ENCODE measurements at regions of chr17 and their contacts with region 1.

Region 1: GRCh38 chr17:16285957-16286640 is 67.2 kb downstream of the CENPV start:
- DNase-seq: peak; percentile 74
- H3K4me3 Mint-ChIP-seq: peak overlapping the region; percentile 61
- H3K27ac Mint-ChIP-seq: peak overlapping the region; percentile 95
- H3K4me1 Mint-ChIP-seq: peaks cover 41% of the 10 kb centered on the region
- H3K27me3 Mint-ChIP-seq: no peaks in the 10 kb centered on the region
- CTCF ChIP-seq: peak; percentile 44

Region 2: DNA sequence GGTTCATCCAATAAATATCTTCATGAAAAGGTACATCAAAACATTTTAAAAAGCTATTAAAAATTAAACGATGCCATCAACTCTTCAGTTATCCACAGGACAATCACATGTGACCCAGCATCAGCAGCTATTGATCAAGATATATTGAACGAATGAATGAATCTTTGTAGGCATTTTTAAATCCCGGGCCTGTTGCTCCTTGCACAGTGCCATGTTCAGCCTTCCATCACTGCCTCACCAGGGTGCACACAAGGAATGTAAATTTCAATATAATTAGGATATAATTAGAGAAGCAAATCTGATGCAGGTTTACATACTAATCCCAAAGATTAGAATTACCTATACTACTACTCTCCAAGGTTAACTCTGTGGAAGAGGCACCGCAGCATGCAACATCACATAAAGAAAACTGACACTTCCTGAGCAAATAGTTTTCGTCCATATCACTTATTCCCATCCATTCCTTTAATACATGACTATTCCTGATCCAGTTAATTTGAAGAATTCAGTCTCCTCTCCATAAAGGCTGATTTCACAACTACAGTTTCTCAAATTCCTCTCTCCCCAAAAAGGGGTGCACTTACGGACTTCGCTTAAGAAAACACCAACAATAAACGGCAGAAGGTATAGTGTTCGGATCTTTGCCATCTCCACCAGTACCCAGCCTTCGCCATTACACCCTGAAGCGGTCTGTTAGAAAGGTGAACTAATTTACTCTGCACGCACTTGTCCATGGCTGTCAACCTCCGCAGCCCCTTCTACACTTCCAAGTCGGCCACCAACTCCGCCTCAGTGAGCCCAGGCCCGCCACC is 71.7 kb before region 1 on chr17:
- CTCF ChIA-PET with region 1: no interaction called
- intact Hi-C with region 1: loop called (anchors 1 kb)
- DNase-seq: no peak
- H3K4me3 Mint-ChIP-seq: peak overlapping the region; percentile 95
- H3K27ac Mint-ChIP-seq: peak overlapping the region; percentile 83
- H3K4me1 Mint-ChIP-seq: no peaks in the 10 kb centered on the region
- H3K27me3 Mint-ChIP-seq: no peaks in the 10 kb centered on the region
- CTCF ChIP-seq: no peak

Region 3: DNA sequence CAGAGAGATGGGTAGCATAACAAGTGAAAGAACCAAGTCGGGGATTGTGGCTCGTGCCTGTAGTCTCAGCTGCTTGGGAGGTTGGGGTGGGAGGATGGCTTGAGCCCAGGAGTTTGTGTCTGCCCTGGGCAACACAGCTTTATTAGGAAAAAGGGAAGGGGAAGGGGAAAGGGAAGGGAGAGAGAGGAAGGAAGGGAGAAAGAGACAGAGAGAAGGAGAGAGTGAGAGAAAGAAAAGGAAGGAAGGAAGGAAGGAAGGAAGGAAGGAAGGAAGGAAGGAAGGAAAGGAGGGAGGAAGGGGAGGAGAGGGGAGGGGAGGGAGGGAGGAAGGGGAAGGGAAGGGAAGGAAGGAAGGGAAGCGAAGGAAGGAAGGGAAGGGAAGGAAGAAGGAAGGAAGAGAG is 33.9 kb after region 1 on chr17:
- CTCF ChIA-PET with region 1: interaction called, 15 read pairs
- intact Hi-C with region 1: no loop called
- DNase-seq: no peak
- H3K4me3 Mint-ChIP-seq: no peak overlapping the region
- H3K27ac Mint-ChIP-seq: no peak overlapping the region
- H3K4me1 Mint-ChIP-seq: no peaks in the 10 kb centered on the region
- H3K27me3 Mint-ChIP-seq: no peaks in the 10 kb centered on the region
- CTCF ChIP-seq: no peak

Region 4: DNA sequence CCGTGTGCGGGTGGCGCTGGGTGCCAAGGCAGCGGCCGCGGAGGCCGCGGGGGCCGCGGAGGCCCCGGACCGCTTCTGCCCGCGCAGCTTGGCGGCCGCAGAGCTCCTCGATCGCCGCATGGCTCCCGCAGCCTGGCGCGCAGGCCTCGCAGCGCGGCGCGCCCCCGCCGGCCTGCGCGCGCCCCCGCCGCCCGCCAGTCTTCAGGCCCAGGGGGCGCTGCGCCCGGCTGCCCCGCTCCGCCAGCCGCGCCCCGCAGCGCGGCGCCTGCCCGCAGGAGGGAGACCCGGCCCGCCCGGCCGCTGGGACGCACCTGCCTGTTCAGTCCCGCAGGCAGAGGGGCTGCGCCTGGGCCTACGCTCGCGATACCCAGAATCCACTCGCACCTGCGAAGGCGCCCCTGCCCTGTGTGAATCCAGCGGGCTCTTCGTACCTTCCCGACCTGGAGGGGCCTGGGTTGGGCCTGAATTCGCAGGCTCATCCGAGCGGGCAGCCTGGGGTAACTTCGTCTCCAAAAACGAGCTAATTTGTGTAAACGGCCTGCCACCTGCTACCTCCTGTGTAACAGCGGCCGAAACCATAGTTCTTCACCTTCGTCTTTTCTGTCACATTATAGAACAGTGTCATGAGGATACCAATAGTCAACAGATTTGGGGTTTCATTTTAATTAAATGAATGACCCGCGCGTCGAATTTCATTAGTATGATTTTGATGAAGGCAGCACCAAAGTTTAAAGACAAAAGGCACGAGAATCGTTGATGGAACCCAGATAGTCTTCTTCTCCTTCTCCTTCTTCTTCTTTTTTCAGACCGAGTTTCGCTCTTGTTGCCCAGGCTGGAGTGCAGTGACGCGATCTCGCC is 67.4 kb after region 1 on chr17 and contains the start of gene CENPV:
- CTCF ChIA-PET with region 1: interaction called, 3 read pairs
- intact Hi-C with region 1: loop called (anchors 5 kb)
- DNase-seq: peak; percentile 66
- H3K4me3 Mint-ChIP-seq: peak within 1 kb of the TSS; percentile 80
- H3K27ac Mint-ChIP-seq: no peak within 1 kb of the TSS
- H3K4me1 Mint-ChIP-seq: no peaks in the 10 kb centered on the region
- H3K27me3 Mint-ChIP-seq: no peaks in the 10 kb centered on the region
- CTCF ChIP-seq: no peak
- total RNA-seq, gene CENPV: 49.9 and 58.0 TPM in 2 replicates

Region 5: DNA sequence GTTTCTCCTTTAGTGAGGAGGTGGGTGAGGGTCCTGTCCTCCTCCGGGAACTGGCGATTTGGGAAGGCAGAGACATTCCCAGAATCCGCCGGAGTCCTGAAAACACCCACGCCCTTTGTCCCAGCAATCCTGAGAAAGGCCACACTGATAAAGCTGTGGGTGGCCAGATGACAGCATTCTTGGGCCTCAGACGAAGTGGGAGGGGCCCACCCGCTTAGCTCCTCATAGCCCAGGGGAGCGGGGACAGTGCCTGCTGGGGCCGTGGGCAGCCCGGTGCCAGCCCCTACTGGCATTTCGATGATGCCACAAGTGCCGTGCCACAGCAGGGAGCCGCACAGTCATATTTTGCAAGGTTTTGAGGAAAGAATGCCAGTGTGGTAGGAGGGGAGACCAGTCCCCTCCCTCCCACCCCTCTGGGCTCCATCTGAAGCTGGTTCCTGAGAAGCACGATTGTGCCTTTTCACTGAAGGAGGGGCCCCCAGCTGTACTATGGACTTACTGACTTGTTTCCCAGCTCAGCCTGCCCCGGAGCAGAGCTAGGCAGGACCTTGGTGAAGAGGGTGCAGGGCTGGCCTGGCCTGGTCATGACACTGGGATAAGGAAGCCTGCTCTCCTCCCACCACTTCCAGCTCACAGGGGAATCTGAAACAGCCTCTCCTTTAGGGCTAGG is 735.2 kb after region 1 on chr17:
- CTCF ChIA-PET with region 1: no interaction called
- intact Hi-C with region 1: no loop called
- DNase-seq: peak; percentile 62
- H3K4me3 Mint-ChIP-seq: no peak overlapping the region
- H3K27ac Mint-ChIP-seq: no peak overlapping the region
- H3K4me1 Mint-ChIP-seq: peaks cover 32% of the 10 kb centered on the region
- H3K27me3 Mint-ChIP-seq: no peaks in the 10 kb centered on the region
- CTCF ChIP-seq: no peak